AG04449 (cell line): ENCODE measurements at regions of chr12 and their contacts with region 1.

Region 1: DNA sequence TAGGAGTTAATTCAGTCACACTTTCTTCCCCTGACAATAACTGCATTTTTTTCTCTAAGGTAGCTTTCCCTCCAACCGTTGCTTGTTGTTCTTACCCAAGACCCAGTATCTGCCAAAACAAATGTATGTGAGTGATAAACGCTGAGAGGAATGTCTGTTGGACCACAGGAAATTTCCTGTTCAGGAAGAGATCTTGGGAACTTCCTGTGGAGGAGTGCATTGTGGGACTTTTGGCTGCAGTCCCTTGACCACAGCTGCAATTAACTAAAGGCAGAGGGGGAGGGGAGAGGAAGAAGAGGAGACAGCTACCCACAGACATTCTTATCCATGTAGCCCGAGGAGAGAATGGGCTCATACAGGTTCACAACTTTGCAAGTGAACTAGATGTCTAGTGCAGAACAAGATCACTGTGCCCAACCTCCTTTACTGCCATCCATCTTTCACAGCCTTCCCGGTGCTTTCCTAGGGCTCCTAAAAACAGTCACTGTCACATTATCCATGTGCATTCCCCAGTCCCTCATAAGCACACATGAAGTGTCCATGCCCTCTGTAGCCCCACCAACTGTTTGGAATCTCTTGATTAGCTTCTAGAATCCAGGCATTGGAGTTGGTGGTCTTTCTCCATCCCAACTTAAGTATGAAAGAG is 149.5 kb downstream of the ETV6 start:
- DNase-seq: peak; percentile 71
- H3K4me3 ChIP-seq: no peak overlapping the region
- CTCF ChIP-seq: no peak

Region 2: GRCh38 chr12:11765817-11766794 is 32.9 kb before region 1 on chr12:
- CTCF ChIA-PET with region 1: no interaction called
- POLR2A ChIA-PET with region 1: interaction called, 20 read pairs
- DNase-seq: no peak
- H3K4me3 ChIP-seq: no peak overlapping the region
- CTCF ChIP-seq: no peak